Caco-2 (cell line): ENCODE measurements at regions of chr13 and their contacts with region 1.

Region 1: DNA sequence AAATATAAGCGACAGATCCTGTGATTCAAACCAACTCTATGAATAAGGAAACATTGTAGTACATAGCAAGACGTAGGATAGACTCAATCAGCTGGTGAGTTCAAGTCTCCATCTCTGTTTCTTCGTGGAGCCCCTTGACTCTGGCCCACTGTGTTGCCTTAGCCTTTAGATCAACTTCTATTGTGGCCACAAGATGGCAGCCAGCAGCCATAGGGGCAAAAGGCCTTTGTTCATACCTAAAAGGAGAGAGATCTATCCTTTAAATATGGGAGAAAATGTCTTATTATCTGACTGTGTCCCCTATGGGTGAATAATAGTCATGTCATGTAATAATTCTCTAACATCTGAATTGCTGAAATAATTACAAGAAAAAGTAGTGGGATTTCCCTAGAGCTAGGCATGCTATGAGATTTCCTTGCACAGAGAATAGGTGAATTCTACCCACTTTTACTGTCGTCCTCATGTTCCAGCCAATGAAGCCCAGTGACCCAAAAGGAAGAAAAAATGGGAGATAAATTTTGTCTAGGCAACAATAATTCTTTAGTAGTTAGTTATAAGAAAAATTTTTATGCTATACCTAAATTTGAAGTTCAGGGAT is 129.4 kb downstream of the PCDH20 start:
- DNase-seq: peak; percentile 51 to 54
- H3K4me3 ChIP-seq: no peak overlapping the region
- H3K4me3 Mint-ChIP-seq: no peak overlapping the region
- H3K27ac Mint-ChIP-seq: no peak overlapping the region
- H3K4me1 ChIP-seq: no peaks in the 10 kb centered on the region
- H3K4me1 Mint-ChIP-seq: no peaks in the 10 kb centered on the region
- H3K27me3 ChIP-seq: no peaks in the 10 kb centered on the region
- H3K27me3 Mint-ChIP-seq: no peaks in the 10 kb centered on the region
- CTCF ChIP-seq: peak; percentile 49 to 72

Region 2: DNA sequence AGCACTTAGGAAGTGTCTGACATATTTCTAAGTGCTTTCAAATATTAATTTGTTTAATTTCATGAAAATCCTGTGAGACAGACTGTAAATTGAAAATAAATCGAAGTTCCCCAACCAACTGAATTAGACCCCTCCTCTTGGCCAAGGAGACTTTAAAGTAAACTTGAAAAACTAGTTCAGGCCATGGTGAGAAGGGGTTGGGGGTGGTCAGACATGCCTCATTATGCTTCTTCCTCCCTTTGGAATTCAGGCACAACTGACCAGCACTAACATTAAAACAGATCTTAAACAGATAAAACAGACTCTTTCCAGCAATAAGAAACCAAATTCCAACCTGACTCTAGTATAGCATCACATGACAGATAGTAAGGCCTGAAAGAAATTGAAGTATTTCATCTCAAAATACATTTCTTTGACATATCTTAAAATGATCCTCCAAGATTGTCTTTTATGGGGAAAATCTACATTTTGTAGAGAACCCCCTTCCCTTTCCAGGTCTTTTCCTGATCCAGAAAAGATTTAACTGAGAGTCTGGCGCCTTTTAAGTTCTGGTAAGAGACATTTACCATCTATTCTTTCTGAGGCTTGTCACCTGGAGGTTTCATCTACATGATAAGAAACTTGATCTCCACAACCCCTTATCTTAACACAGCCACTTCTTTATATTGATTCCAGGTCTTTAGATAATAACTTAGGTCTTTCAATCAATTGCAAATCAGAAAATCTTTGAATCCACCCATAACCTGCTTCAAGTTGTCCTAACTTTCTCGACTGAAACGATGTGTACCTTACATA is 207.1 kb before region 1 on chr13:
- CTCF ChIA-PET with region 1: no interaction called
- POLR2A ChIA-PET with region 1: no interaction called
- intact Hi-C with region 1: no loop called
- DNase-seq: no peak
- H3K4me3 ChIP-seq: no peak overlapping the region
- H3K4me3 Mint-ChIP-seq: no peak overlapping the region
- H3K27ac Mint-ChIP-seq: no peak overlapping the region
- H3K4me1 ChIP-seq: no peaks in the 10 kb centered on the region
- H3K4me1 Mint-ChIP-seq: no peaks in the 10 kb centered on the region
- H3K27me3 ChIP-seq: no peaks in the 10 kb centered on the region
- H3K27me3 Mint-ChIP-seq: peaks cover 9% of the 10 kb centered on the region
- CTCF ChIP-seq: no peak

Region 3: GRCh38 chr13:61410669-61411297 is 124.5 kb after region 1 on chr13:
- CTCF ChIA-PET with region 1: interaction called, 3 read pairs
- POLR2A ChIA-PET with region 1: no interaction called
- intact Hi-C with region 1: loop called (anchors 1 kb)
- DNase-seq: no peak
- H3K4me3 ChIP-seq: no peak overlapping the region
- H3K4me3 Mint-ChIP-seq: no peak overlapping the region
- H3K27ac Mint-ChIP-seq: no peak overlapping the region
- H3K4me1 ChIP-seq: no peaks in the 10 kb centered on the region
- H3K4me1 Mint-ChIP-seq: peaks cover 8% of the 10 kb centered on the region
- H3K27me3 ChIP-seq: no peaks in the 10 kb centered on the region
- H3K27me3 Mint-ChIP-seq: peaks cover 9% of the 10 kb centered on the region
- CTCF ChIP-seq: peak; percentile 62 to 73

Region 4: GRCh38 chr13:61423915-61424314 is 137.7 kb after region 1 on chr13:
- CTCF ChIA-PET with region 1: no interaction called
- POLR2A ChIA-PET with region 1: no interaction called
- intact Hi-C with region 1: no loop called
- DNase-seq: no peak
- H3K4me3 ChIP-seq: no peak overlapping the region
- H3K4me3 Mint-ChIP-seq: no peak overlapping the region
- H3K27ac Mint-ChIP-seq: no peak overlapping the region
- H3K4me1 ChIP-seq: no peaks in the 10 kb centered on the region
- H3K4me1 Mint-ChIP-seq: no peaks in the 10 kb centered on the region
- H3K27me3 ChIP-seq: no peaks in the 10 kb centered on the region
- H3K27me3 Mint-ChIP-seq: peaks cover 2% of the 10 kb centered on the region
- CTCF ChIP-seq: no peak

Region 5: GRCh38 chr13:61466280-61466679 is 180.0 kb after region 1 on chr13:
- CTCF ChIA-PET with region 1: no interaction called
- POLR2A ChIA-PET with region 1: no interaction called
- intact Hi-C with region 1: loop called (anchors 2 kb)
- DNase-seq: peak in 1 of 2 experiments; percentile 29
- H3K4me3 ChIP-seq: no peak overlapping the region
- H3K4me3 Mint-ChIP-seq: no peak overlapping the region
- H3K27ac Mint-ChIP-seq: no peak overlapping the region
- H3K4me1 ChIP-seq: no peaks in the 10 kb centered on the region
- H3K4me1 Mint-ChIP-seq: no peaks in the 10 kb centered on the region
- H3K27me3 ChIP-seq: no peaks in the 10 kb centered on the region
- H3K27me3 Mint-ChIP-seq: no peaks in the 10 kb centered on the region
- CTCF ChIP-seq: peak; percentile 29 to 61

Region 6: GRCh38 chr13:61575973-61576372 is 289.7 kb after region 1 on chr13:
- CTCF ChIA-PET with region 1: no interaction called
- POLR2A ChIA-PET with region 1: no interaction called
- intact Hi-C with region 1: loop called (anchors 5 kb)
- DNase-seq: peak in 1 of 2 experiments; percentile 7
- H3K4me3 ChIP-seq: no peak overlapping the region
- H3K4me3 Mint-ChIP-seq: no peak overlapping the region
- H3K27ac Mint-ChIP-seq: no peak overlapping the region
- H3K4me1 ChIP-seq: peaks cover 13% of the 10 kb centered on the region
- H3K4me1 Mint-ChIP-seq: peaks cover 11% of the 10 kb centered on the region
- H3K27me3 ChIP-seq: no peaks in the 10 kb centered on the region
- H3K27me3 Mint-ChIP-seq: no peaks in the 10 kb centered on the region
- CTCF ChIP-seq: no peak

Region 7: GRCh38 chr13:61685682-61686012 is 399.4 kb after region 1 on chr13:
- CTCF ChIA-PET with region 1: no interaction called
- POLR2A ChIA-PET with region 1: no interaction called
- intact Hi-C with region 1: loop called (anchors 1 kb)
- DNase-seq: peak; percentile 48 to 54
- H3K4me3 ChIP-seq: no peak overlapping the region
- H3K4me3 Mint-ChIP-seq: no peak overlapping the region
- H3K27ac Mint-ChIP-seq: no peak overlapping the region
- H3K4me1 ChIP-seq: no peaks in the 10 kb centered on the region
- H3K4me1 Mint-ChIP-seq: no peaks in the 10 kb centered on the region
- H3K27me3 ChIP-seq: no peaks in the 10 kb centered on the region
- H3K27me3 Mint-ChIP-seq: no peaks in the 10 kb centered on the region
- CTCF ChIP-seq: peak in 1 of 2 experiments; percentile 58

Region 8: DNA sequence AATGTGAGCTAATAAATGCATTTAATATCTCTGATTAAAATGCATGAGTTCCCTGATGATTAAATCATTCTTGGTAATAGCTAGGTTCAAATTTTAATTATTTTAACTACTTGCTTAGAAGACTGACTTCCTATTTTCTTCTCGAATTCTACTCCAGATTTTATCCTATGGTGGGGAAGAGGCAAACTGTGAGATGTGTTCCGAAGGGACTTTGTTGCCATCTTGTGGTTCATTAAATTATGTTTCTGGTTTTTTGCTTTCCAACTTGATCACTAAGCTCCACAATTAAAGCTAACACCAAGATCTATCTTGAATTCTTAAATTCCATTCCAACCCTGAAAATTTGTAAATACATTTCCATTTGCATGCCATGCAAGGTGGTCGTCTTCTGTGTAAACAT is 667.8 kb after region 1 on chr13:
- CTCF ChIA-PET with region 1: no interaction called
- POLR2A ChIA-PET with region 1: no interaction called
- intact Hi-C with region 1: loop called (anchors 1 kb)
- DNase-seq: peak in 1 of 2 experiments; percentile 17
- H3K4me3 ChIP-seq: no peak overlapping the region
- H3K4me3 Mint-ChIP-seq: no peak overlapping the region
- H3K27ac Mint-ChIP-seq: no peak overlapping the region
- H3K4me1 ChIP-seq: no peaks in the 10 kb centered on the region
- H3K4me1 Mint-ChIP-seq: no peaks in the 10 kb centered on the region
- H3K27me3 ChIP-seq: no peaks in the 10 kb centered on the region
- H3K27me3 Mint-ChIP-seq: peaks cover 3% of the 10 kb centered on the region
- CTCF ChIP-seq: peak; percentile 28 to 39

Region 9: DNA sequence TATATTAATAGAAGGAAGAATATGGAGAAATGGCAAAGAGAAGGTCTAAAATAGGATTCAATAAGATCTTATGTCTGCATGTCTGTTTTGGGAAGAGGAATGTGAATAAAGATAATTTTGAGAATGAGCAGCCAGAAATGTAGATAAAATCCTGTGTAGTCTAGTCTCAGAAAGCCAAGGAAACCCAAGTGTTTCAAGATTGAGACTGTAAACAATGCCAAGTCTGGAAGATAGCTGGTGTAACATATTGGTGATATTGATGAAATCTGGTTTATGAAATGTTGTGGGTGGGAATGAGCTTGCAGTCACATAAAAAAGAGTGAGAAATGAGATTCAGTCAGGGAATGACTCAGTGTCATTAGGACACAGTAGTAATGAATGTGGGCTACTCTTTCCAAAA is 1309.7 kb after region 1 on chr13:
- CTCF ChIA-PET with region 1: no interaction called
- POLR2A ChIA-PET with region 1: no interaction called
- intact Hi-C with region 1: no loop called
- DNase-seq: no peak
- H3K4me3 ChIP-seq: no peak overlapping the region
- H3K4me3 Mint-ChIP-seq: no peak overlapping the region
- H3K27ac Mint-ChIP-seq: no peak overlapping the region
- H3K4me1 ChIP-seq: no peaks in the 10 kb centered on the region
- H3K4me1 Mint-ChIP-seq: no peaks in the 10 kb centered on the region
- H3K27me3 ChIP-seq: no peaks in the 10 kb centered on the region
- H3K27me3 Mint-ChIP-seq: no peaks in the 10 kb centered on the region
- CTCF ChIP-seq: no peak